AG04449 (cell line): ENCODE measurements at regions of chr16 and their contacts with region 1.

Region 1: DNA sequence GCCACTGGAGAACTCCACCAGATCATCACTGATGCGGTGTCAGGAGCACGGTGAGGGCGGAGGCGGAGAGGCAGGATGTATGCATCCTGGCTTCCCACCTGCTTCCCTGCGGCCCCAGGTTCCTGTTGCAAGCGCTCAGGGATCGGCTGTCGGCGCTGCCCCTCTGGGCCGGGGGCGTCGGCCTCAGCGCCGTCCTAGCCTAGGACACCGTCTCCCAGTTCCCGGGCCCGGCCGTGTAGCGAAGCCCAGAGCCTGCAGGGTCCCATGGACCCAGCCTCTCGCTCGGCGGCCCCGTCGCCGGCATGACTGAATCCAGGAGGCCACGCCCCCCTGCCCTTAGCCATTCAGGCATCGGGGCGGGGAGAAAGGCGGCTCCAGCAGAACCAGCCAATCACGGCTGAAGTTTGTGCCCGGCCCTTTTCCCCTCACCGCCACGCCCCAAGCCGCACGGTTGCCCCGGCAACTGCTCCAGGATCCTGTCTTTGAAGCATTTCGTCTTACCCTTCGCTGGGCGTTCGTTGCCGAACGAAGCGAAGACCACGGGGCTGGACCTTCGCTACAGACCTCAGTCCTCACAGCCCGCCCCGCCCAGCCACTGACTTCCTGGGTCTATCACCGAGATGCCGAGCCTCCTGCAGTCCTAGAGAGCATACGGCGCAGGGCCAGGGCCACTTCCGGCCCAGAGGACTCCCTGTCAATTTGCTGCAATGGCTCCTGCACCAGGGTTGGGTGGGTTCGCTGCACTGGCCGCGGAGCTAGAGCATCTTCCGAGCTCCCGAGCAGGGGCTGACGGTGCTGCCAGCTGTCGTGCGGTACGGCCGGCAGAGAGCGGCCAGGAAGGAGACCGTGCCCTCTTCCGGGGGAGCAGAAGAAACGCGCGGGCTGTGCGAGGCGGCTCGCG is 10.6 kb upstream of the ZNF213 start:
- DNase-seq: peak; percentile 29
- H3K4me3 ChIP-seq: peak overlapping the region; percentile 85
- CTCF ChIP-seq: peak; percentile 20

Region 2: DNA sequence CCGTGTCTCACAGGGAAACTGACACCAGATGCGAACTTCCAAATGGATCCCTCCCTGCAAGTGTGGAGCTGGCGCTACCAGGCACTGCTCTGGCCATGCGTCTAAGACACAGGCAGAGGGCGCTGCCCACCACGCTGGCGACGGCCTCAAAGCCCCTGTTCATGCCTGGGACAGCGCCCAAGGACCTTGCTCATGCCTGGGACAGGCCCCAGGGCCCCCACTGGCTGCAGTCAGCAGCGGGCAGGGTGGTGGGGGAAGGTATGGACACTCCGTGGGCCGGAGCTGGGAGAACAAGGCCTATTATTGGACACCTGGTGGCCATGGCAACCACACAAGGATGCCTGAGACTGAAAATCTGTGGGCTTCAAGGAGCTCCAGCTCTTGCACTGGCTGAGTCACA is 285.3 kb before region 1 on chr16:
- CTCF ChIA-PET with region 1: no interaction called
- POLR2A ChIA-PET with region 1: no interaction called
- DNase-seq: peak; percentile 23
- H3K4me3 ChIP-seq: no peak overlapping the region
- CTCF ChIP-seq: peak; percentile 96

Region 3: DNA sequence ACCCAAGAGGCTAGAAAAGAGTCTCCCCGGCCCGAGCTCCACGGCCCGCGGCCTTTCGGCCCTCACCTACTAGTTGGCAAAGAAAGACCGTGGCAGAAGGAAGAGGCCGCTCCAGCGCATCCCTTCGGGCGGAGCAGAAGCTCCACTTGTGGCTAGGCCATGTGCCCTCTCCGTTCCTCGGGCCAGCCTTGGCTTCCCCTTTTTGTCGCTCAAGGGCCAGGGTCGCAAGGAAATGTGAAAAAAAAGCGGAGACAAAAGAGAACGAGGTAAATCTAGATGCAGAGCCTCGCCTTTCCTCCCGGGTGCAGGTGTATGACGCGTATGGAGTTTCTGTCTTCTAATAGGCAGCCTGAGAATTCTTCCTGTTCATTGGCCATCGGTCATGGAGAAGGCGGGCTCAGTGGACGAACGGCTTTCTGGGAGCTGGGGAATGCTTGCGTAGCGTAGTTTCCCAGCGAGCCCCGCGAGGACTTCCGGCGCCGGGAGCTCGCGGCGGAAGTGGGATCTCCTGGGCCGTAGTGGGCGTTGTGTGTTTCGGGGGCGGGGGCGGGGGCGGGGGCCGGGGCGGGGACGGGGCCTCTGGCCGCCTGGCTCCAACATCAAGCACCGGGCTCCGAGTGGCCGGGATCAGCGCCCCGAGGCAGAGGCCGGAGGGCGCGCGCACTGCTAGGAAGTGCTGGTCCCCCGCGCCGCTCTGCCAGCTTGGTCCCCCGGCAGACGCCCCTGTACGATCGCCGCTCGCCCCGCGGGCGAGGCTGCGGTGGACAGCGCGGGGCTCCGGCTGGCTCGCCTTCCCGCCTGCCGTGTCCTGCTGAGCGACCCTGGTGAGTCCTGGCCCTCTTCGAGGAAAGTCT is 10.6 kb after region 1 on chr16 and contains the start of gene ZNF213:
- CTCF ChIA-PET with region 1: interaction called, 57 read pairs
- POLR2A ChIA-PET with region 1: interaction called, 7 read pairs
- DNase-seq: peak; percentile 87
- H3K4me3 ChIP-seq: peak within 1 kb of the TSS; percentile 95
- CTCF ChIP-seq: no peak